ENCODE measurements at regions of chr4 and their contacts with region 1.

Region 1: DNA sequence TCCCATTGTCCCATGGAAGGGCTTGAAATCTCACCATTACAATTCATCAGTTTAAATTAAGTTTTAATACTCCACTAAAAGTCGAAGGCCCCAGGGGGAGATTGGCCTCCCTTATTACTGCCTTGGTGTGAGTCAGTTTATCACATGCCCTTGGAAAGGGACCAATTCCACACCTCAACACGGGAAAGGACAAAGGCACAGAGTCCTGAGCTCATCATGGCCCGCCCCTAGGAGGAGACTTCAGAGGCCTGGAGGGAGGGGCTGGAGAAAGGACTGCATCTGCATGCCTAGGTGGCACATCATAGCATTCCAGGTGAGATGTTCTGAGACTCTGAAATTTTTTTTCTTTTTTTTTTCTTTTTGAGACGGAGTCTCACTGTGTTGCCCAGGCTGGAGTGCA is 2.8 kb upstream of the SEL1L3 start:
- DNase-seq: no peak
- ATAC-seq: no peak
- H3K4me3 ChIP-seq: no peak overlapping the region
- H3K27ac ChIP-seq: no peak overlapping the region
- H3K4me1 ChIP-seq: peaks cover 29% of the 10 kb centered on the region
- H3K27me3 ChIP-seq: peaks cover 1 to 6% of the 10 kb centered on the region in 2 experiments; a peak in 3 of 4 replicates
- CTCF ChIP-seq: no peak
- EP300 ChIP-seq: no peak
- POLR2A ChIP-seq: no peak
- RAD21 ChIP-seq: no peak

Region 2: GRCh38 chr4:25531272-25531671 is 334.3 kb before region 1 on chr4:
- CTCF ChIA-PET with region 1: no interaction called
- POLR2A ChIA-PET with region 1: no interaction called
- RAD21 ChIA-PET with region 1: no interaction called
- SMC1A ChIA-PET with region 1: no interaction called
- in situ Hi-C with region 1: no loop called
- intact Hi-C with region 1: no loop called
- DNase-seq: no peak
- ATAC-seq: no peak
- H3K4me3 ChIP-seq: no peak overlapping the region
- H3K27ac ChIP-seq: no peak overlapping the region
- H3K4me1 ChIP-seq: no peaks in the 10 kb centered on the region
- H3K27me3 ChIP-seq: no peaks in the 10 kb centered on the region
- CTCF ChIP-seq: peak in 2 of 3 experiments; percentile 20 to 22; a peak in 1 of 6 replicates
- EP300 ChIP-seq: no peak
- POLR2A ChIP-seq: no peak
- RAD21 ChIP-seq: no peak

Region 3: DNA sequence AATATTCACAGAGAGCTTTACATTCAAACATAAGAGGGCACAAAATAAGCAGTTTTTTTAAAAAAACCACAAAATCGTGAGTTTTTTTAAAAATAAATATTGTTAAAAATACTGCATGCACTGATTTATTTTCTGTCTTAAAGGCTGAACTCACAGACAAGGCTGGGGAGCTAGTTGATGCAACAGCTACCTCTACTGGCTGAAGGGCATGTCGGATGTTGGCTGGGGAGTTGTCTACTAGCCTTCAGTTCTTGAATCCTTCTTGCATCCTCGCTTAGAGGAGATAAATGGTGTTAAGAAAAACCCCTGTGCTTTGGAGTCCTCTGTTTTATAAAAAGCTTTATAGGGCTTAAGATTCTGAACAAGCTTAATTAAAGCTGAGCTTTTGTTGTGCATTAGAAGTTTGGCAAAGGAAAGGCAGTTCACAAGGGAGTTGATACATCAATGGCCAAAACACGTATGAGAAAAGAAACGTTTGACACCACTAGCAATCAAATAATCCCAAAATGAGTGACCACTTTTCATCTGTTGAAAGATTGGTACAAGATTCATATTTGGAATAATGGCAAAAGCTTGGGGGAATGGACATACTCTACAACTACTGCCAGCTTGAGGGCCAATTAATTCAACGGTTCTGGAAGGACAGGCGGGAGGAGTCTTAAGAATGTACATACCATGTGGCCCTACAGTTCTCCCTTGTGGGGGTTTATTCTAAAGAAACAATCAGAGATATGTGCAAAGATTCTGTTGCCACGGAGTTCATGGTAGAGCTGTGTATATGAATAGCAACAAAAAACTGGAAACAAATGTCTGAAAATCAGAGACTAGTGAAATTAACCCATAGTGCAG is 97.5 kb before region 1 on chr4:
- CTCF ChIA-PET with region 1: no interaction called
- POLR2A ChIA-PET with region 1: no interaction called
- RAD21 ChIA-PET with region 1: no interaction called
- SMC1A ChIA-PET with region 1: no interaction called
- in situ Hi-C with region 1: no loop called
- intact Hi-C with region 1: no loop called
- DNase-seq: no peak
- ATAC-seq: peak; percentile 88
- H3K4me3 ChIP-seq: no peak overlapping the region
- H3K27ac ChIP-seq: no peak overlapping the region
- H3K4me1 ChIP-seq: no peaks in the 10 kb centered on the region
- H3K27me3 ChIP-seq: no peaks in the 10 kb centered on the region
- CTCF ChIP-seq: peak; percentile 78 to 88 (median 86)
- EP300 ChIP-seq: no peak
- POLR2A ChIP-seq: no peak
- RAD21 ChIP-seq: peak; percentile 79

Region 4: GRCh38 chr4:25879991-25880651 is 14.5 kb after region 1 on chr4:
- CTCF ChIA-PET with region 1: interaction called, 4 read pairs
- POLR2A ChIA-PET with region 1: interaction called, 8 read pairs
- RAD21 ChIA-PET with region 1: interaction called, 10 read pairs
- SMC1A ChIA-PET with region 1: interaction called, 35 read pairs
- in situ Hi-C with region 1: no loop called
- intact Hi-C with region 1: no loop called
- DNase-seq: no peak
- ATAC-seq: peak; percentile 83
- H3K4me3 ChIP-seq: no peak overlapping the region
- H3K27ac ChIP-seq: peak overlapping the region; percentile 53; the same call in 1 of the 2 replicates
- H3K4me1 ChIP-seq: peaks cover 66% of the 10 kb centered on the region
- H3K27me3 ChIP-seq: no peaks in the 10 kb centered on the region
- CTCF ChIP-seq: no peak
- EP300 ChIP-seq: peak; percentile 78 to 90; a peak in 3 of 4 replicates
- POLR2A ChIP-seq: no peak
- RAD21 ChIP-seq: no peak

Region 5: DNA sequence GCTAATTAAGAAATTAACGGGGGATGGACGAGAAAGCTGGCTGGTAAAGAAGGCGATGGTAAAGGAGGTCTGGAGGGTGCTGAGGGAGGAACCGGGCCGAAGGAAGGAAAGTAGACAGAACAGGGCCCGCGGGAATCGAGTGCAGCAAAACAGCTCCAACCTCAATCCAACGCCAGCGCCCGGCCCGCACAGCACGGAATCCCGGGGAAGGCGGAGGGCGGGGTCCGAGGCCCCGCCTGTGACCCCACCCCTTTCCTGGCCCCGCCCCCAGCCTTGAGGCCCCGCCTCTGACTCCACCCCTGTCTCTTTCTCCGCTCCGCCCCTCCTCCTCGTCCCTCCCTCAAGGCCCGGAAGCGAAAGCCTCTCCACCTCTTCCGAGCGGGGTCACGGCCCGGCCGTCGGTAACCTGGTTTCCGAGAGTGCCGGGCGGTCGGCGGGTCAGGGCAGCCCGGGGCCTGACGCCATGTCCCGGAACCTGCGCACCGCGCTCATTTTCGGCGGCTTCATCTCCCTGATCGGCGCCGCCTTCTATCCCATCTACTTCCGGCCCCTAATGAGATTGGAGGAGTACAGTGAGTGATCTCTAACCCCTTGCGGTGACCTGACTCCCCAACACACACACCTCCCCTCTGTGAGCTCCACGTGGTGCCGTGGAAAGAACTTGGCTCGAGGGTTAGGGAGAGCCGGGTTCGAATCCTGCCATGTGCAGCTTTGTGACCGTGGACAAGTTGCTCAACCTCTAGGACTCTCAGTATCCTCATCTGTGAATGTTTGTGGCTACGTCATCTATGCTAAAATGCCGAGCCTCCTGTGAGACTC is 48.5 kb after region 1 on chr4 and contains the start of gene SMIM20:
- CTCF ChIA-PET with region 1: interaction called, 3 read pairs
- POLR2A ChIA-PET with region 1: interaction called, 4 read pairs
- RAD21 ChIA-PET with region 1: interaction called, 13 read pairs
- SMC1A ChIA-PET with region 1: interaction called, 22 read pairs
- in situ Hi-C with region 1: no loop called
- intact Hi-C with region 1: no loop called
- DNase-seq: peak; percentile 56
- ATAC-seq: peak; percentile 97
- H3K4me3 ChIP-seq: peak within 1 kb of the TSS; percentile 78
- H3K27ac ChIP-seq: peak within 1 kb of the TSS; percentile 84
- H3K4me1 ChIP-seq: peaks cover 18% of the 10 kb centered on the region
- H3K27me3 ChIP-seq: no peaks in the 10 kb centered on the region
- CTCF ChIP-seq: no peak
- EP300 ChIP-seq: no peak
- POLR2A ChIP-seq: peak; percentile 94
- RAD21 ChIP-seq: no peak
- polyA plus RNA-seq, gene SMIM20: 32.5 to 32.6 TPM

Region 6: GRCh38 chr4:26937139-26937538 is 1071.6 kb after region 1 on chr4:
- CTCF ChIA-PET with region 1: no interaction called
- POLR2A ChIA-PET with region 1: no interaction called
- RAD21 ChIA-PET with region 1: no interaction called
- SMC1A ChIA-PET with region 1: no interaction called
- in situ Hi-C with region 1: no loop called
- intact Hi-C with region 1: no loop called
- DNase-seq: no peak
- ATAC-seq: peak; percentile 77
- H3K4me3 ChIP-seq: no peak overlapping the region
- H3K27ac ChIP-seq: no peak overlapping the region
- H3K4me1 ChIP-seq: peaks cover 4% of the 10 kb centered on the region; the same call in 1 of the 2 replicates
- H3K27me3 ChIP-seq: no peaks in the 10 kb centered on the region
- CTCF ChIP-seq: 0 out of 6 replicates have a peak, but pooled peaks of 1 of the 3 experiments have one; percentile 8
- EP300 ChIP-seq: no peak
- POLR2A ChIP-seq: no peak
- RAD21 ChIP-seq: 0 out of 2 replicates have a peak, but pooled peaks have one; percentile 10

Measured in GM12878 (cell line).